K562 (cell line): ENCODE measurements at regions of chr19 and their contacts with region 1.

Region 1: DNA sequence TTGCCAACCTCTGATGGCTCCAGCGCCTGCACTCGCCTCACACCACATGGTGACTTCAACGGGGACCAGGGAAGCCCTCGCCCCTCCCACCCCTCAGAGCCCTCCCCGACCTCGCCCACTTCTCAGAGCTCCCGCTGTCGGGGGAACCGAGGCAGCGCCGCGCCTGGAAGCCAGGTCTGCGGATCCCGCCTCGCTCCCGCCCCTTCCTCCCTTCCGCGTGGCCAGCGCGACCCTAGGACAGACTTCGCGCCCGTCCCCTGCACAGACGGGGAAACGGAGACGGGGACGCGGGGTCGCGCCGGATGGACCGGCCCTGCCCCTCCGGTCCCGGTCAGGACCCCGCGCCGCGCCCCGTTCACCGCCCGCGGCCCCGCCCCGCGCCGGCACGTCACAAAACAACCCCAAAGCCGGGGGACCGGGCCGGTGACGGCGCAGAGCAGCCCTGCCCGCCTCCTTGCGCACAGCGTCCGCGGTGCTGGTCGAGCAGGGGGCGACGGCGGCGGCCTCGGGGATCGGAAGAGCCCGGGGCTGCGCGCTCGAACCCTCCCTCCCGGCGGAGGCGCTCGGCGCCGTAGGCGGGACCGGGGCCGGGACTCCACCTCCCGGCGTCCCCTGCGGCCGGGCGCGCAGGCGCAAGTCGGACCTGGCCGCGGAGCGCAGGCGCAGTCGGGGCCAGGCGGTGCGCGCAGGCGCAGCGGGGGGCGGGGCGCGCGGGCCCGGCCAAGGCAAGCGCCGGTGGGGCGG is 379 bp upstream of the CDC34 start:
- DNase-seq: peak; percentile 92 to 98 (median 95)
- ATAC-seq: peak; percentile 85
- H3K4me3 ChIP-seq: peak overlapping the region; percentile 97
- H3K27ac ChIP-seq: peak overlapping the region; percentile 90
- H3K4me1 ChIP-seq: peaks cover 9 to 79% of the 10 kb centered on the region in 2 experiments; a peak in 4 of 5 replicates
- H3K27me3 ChIP-seq: no peaks in the 10 kb centered on the region
- CTCF ChIP-seq: peak in 2 of 3 experiments; percentile 24 to 33; a peak in 3 of 6 replicates
- EP300 ChIP-seq: no peak
- POLR2A ChIP-seq: peak; percentile 61; the same call in 1 of the 2 replicates
- RAD21 ChIP-seq: no peak

Region 2: DNA sequence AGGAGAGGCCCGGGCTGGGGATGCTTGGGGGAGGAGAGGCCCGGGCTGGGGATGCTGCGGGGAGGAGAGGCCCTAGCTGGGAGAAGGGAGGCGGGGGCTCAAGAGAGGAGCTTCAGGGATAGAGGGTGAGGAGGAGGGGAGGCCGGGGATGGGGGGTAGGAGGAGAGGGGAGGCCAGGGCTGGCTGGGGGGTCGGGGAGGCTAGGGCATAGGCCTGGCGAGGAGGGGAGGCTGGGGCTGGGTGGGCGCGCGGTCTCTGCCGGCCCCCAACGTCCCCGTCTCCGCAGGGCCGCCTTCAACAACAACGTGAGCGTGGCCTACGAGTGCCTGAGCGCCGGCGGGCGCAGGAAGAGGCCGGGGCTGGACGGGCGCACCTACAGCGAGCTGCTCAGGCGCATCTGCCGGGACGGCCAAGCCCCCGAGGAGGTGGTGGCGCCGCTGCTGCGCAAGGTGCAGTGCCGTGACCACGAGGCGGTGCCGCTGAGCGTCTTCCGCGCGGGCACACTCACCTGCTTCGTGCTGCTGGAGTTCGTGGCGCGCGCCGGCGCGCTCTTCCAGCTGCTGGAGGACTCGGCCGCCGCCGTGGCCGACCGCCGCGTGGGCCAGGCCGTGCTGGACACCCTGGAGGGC is 12.5 kb before region 1 on chr19:
- CTCF ChIA-PET with region 1: no interaction called
- POLR2A ChIA-PET with region 1: interaction called, 11 read pairs
- in situ Hi-C with region 1: no loop called
- intact Hi-C with region 1: no loop called
- DNase-seq: no peak
- ATAC-seq: no peak
- H3K4me3 ChIP-seq: no peak overlapping the region
- H3K27ac ChIP-seq: no peak overlapping the region
- H3K4me1 ChIP-seq: peaks cover 8 to 60% of the 10 kb centered on the region in 2 experiments; a peak in 4 of 5 replicates
- H3K27me3 ChIP-seq: no peaks in the 10 kb centered on the region
- CTCF ChIP-seq: no peak
- EP300 ChIP-seq: no peak
- POLR2A ChIP-seq: no peak
- RAD21 ChIP-seq: no peak

Region 3: GRCh38 chr19:542173-542866 is 11.1 kb after region 1 on chr19:
- CTCF ChIA-PET with region 1: no interaction called
- POLR2A ChIA-PET with region 1: interaction called, 12 read pairs
- in situ Hi-C with region 1: no loop called
- intact Hi-C with region 1: no loop called
- DNase-seq: no peak
- ATAC-seq: peak; percentile 12
- H3K4me3 ChIP-seq: no peak overlapping the region
- H3K27ac ChIP-seq: no peak overlapping the region
- H3K4me1 ChIP-seq: peaks cover 8 to 45% of the 10 kb centered on the region in 2 experiments
- H3K27me3 ChIP-seq: no peaks in the 10 kb centered on the region
- CTCF ChIP-seq: no peak
- EP300 ChIP-seq: no peak
- POLR2A ChIP-seq: no peak
- RAD21 ChIP-seq: no peak

Region 4: GRCh38 chr19:556611-557382 is 25.6 kb after region 1 on chr19:
- CTCF ChIA-PET with region 1: no interaction called
- POLR2A ChIA-PET with region 1: interaction called, 12 read pairs
- in situ Hi-C with region 1: no loop called
- intact Hi-C with region 1: no loop called
- DNase-seq: peak; percentile 48 to 81 (median 61)
- ATAC-seq: peak; percentile 55
- H3K4me3 ChIP-seq: peak overlapping the region; percentile 2; the same call in 1 of the 2 replicates
- H3K27ac ChIP-seq: peak overlapping the region; percentile 83
- H3K4me1 ChIP-seq: peaks cover 22 to 62% of the 10 kb centered on the region in 2 experiments; a peak in 4 of 5 replicates
- H3K27me3 ChIP-seq: no peaks in the 10 kb centered on the region
- CTCF ChIP-seq: no peak
- EP300 ChIP-seq: no peak
- POLR2A ChIP-seq: no peak
- RAD21 ChIP-seq: no peak

Region 5: DNA sequence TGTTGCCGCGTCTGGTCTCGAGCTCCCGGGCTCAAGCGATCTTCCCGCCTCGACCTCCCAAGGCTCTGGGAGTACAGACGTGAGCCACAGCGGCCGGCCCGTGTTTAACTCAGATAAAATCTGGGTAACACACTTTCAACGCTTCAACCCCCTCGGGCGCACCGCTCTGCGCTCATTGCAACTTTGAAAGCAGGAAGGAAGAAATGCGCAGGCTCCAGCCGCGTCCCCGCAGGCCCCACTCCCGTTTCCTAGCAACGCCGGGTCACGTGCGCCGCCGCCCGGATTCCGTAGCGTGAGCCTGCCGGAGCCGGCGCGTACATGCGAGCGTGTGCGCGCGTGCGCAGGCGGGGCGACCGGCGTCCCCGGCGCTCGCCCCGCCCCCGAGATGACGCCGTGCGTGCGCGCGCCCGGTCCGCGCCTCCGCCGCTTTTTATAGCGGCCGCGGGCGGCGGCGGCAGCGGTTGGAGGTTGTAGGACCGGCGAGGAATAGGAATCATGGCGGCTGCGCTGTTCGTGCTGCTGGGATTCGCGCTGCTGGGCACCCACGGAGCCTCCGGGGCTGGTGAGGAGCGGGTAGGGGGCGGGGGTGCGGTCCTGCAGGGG is 41.1 kb after region 1 on chr19 and contains the start of gene BSG:
- CTCF ChIA-PET with region 1: no interaction called
- POLR2A ChIA-PET with region 1: interaction called, 12 read pairs
- in situ Hi-C with region 1: no loop called
- intact Hi-C with region 1: no loop called
- DNase-seq: peak; percentile 93 to 100 (median 96)
- ATAC-seq: peak; percentile 79
- H3K4me3 ChIP-seq: peak within 1 kb of the TSS; percentile 99
- H3K27ac ChIP-seq: peak within 1 kb of the TSS; percentile 94
- H3K4me1 ChIP-seq: peaks cover 28 to 70% of the 10 kb centered on the region in 2 experiments
- H3K27me3 ChIP-seq: no peaks in the 10 kb centered on the region
- CTCF ChIP-seq: no peak
- EP300 ChIP-seq: peak; percentile 49
- POLR2A ChIP-seq: peak; percentile 97
- RAD21 ChIP-seq: no peak
- polyA plus RNA-seq, gene BSG: 4.6 to 17.9 TPM

Region 6: GRCh38 chr19:588093-588740 is 57.0 kb after region 1 on chr19:
- CTCF ChIA-PET with region 1: no interaction called
- POLR2A ChIA-PET with region 1: interaction called, 3 read pairs
- in situ Hi-C with region 1: no loop called
- intact Hi-C with region 1: loop called (anchors 10 kb)
- DNase-seq: peak; percentile 39 to 76 (median 48)
- ATAC-seq: peak; percentile 61
- H3K4me3 ChIP-seq: no peak overlapping the region
- H3K27ac ChIP-seq: no peak overlapping the region
- H3K4me1 ChIP-seq: peaks cover 3 to 89% of the 10 kb centered on the region in 2 experiments; a peak in 3 of 5 replicates
- H3K27me3 ChIP-seq: peaks cover 0 to 13% of the 10 kb centered on the region in 2 experiments; a peak in 2 of 5 replicates
- CTCF ChIP-seq: peak; percentile 54 to 65 (median 64)
- EP300 ChIP-seq: no peak
- POLR2A ChIP-seq: no peak
- RAD21 ChIP-seq: 0 out of 4 replicates have a peak, but pooled peaks of 1 of the 2 experiments have one; percentile 18